GM10248 (cell line): ENCODE measurements at regions of chr11 and their contacts with region 1.

Region 1: GRCh38 chr11:73625696-73626318 is 20.6 kb upstream of the PLEKHB1 start:
- DNase-seq: peak; percentile 84
- CTCF ChIP-seq: peak; percentile 85

Region 2: GRCh38 chr11:73204711-73205121 is 421.1 kb before region 1 on chr11:
- CTCF ChIA-PET with region 1: no interaction called
- POLR2A ChIA-PET with region 1: no interaction called
- DNase-seq: no peak
- CTCF ChIP-seq: no peak

Region 3: GRCh38 chr11:73570415-73571114 is 55.2 kb before region 1 on chr11:
- CTCF ChIA-PET with region 1: interaction called, 15 read pairs
- POLR2A ChIA-PET with region 1: no interaction called
- DNase-seq: no peak
- CTCF ChIP-seq: no peak

Region 4: DNA sequence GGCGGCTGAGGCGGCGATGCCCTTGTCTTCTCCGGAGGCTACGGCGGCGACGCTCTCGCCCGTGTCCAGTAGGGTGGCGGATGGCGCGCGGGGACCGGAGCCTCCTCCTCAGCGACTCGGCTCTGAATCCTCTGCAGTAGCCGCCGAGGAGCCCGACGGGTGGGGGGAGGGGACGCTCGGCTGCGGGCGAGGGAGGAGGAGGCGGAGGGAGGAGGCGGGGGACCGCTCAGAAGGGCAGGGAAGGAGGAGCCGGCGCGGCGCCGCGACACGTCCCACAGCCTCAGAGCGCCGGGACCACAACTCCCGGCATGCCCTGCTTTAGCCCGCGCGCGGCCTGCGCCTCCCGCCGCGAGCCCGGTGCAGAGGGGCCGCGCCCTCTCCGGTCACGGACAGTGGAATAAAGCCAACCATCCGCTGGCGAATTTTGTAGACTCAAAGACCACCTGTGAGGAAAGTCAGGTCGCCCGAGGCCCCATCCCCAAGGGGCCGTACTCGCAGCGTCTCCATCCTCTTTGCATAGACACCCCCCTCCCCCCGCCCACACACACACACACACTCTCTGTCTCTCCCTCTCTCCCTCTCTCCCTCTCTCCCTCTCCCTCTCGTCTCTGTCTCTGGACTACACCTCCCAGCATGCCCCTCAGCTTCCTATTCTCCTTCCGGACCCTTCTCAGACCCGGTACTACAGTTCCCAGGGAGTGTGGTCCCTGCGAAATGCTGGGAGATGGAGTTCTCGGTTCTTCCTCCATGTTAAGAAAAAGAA is 27.7 kb before region 1 on chr11 and contains the start of gene FAM168A:
- CTCF ChIA-PET with region 1: interaction called, 12 read pairs
- POLR2A ChIA-PET with region 1: no interaction called
- DNase-seq: peak; percentile 96
- CTCF ChIP-seq: peak; percentile 18

Region 5: GRCh38 chr11:73640592-73640991 is 14.8 kb after region 1 on chr11:
- CTCF ChIA-PET with region 1: interaction called, 48 read pairs
- POLR2A ChIA-PET with region 1: no interaction called
- DNase-seq: no peak
- CTCF ChIP-seq: no peak

Region 6: GRCh38 chr11:73931039-73931645 is 305.3 kb after region 1 on chr11:
- CTCF ChIA-PET with region 1: interaction called, 13 read pairs
- POLR2A ChIA-PET with region 1: no interaction called
- DNase-seq: peak; percentile 39
- CTCF ChIP-seq: no peak